Activated CD4-positive, alpha-beta memory T cell treated with anti-CD3 and anti-CD28 coated beads for 36 hours (primary cell): ENCODE measurements at regions of chr3 and their contacts with region 1.

Region 1: DNA sequence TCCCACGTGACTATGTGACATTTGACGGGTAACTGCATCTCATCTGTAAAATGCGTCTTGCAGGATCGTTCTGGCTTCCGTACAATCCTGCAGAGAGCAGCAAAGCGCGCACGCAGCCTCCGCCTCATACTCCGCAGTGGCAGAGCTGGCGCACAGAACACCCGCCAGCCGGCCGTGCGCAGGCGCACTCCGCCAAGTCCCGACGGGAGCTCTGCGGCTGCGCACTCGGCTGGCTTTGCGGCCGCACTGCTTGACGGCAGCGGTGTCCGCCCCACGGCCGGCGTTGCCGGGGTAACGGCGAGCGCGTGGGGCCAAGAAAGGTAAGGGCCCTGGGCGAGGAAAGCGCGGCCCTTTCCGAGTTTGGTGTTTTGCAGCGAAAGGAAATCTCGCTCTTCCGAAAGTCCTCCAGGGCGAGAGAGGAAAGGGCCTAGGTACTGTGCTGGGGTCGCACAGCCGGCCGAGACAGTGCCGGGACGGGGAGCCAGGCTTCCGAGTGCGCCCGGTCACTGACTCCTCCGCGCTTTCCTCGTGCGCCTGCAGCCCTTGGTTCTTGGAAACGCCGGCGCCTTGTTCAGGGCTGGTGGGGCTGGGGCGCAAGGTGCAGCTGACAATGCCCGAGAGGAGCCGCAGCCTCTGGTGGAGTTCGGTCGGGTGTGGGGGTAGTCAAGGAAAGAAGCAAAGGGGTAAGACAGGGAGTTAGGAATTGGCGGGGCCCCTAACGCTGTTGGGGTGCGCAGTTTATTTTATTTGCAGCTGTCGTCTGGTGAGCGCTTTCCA is at the start of gene TSEN2:
- DNase-seq: peak; percentile 97
- H3K4me3 Mint-ChIP-seq: peak within 1 kb of the TSS; percentile 99
- H3K27ac Mint-ChIP-seq: peak within 1 kb of the TSS; percentile 89
- H3K4me1 Mint-ChIP-seq: peaks cover 36% of the 10 kb centered on the region
- H3K27me3 Mint-ChIP-seq: no peaks in the 10 kb centered on the region
- total RNA-seq, gene TSEN2: 13.8 to 15.4 TPM

Region 2: GRCh38 chr3:12135029-12135657 is 349.2 kb before region 1 on chr3:
- CTCF ChIA-PET with region 1: interaction called, 274 read pairs
- POLR2A ChIA-PET with region 1: interaction called, 4 read pairs
- intact Hi-C with region 1: loop called (anchors 1 kb)
- DNase-seq: peak; percentile 78
- H3K4me3 Mint-ChIP-seq: no peak overlapping the region
- H3K27ac Mint-ChIP-seq: no peak overlapping the region
- H3K4me1 Mint-ChIP-seq: no peaks in the 10 kb centered on the region
- H3K27me3 Mint-ChIP-seq: peaks cover 12% of the 10 kb centered on the region

Region 3: DNA sequence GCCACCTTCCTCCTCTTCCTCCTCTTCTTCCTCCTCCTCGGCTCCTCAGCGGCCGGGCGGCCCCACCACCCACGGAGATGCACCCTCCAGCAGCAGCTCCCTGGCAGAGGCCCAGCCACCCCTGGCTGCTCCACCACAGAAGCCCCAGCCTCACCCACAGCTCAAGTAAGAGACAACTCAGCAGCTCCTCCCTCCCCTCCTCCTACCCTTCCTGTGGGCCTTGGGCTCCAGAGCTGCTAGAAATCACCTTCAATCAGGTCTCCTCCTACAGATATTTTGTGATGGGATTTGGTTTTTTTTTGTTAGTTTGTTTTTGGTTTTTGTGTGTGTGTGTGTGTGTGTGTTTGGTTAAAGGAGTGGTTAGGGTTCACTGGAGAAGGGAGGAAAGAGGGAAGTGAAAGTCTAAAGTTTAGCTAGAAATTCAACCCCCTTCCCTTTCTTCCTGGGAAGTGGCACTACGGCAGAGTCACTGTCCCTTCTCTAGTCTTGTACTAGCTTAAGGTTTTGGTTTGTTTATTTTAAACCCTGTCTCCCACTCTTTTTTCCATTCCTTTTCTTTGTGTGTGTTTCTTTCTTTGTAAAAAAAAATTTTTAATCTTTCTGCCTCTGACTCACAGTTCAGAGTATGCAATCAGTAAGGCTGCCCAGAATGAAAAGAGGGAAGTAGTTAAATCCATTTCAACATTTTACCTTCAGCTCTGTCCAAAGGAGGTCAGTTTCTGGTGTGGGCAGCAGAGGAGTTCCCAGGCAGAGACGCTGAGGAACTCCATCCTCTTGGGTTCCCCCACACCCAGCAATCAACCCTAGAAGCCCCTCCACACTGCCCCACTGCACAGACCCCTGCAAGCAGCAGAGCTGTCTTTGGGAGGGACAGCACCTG is 296.7 kb before region 1 on chr3:
- CTCF ChIA-PET with region 1: interaction called, 15 read pairs
- POLR2A ChIA-PET with region 1: no interaction called
- intact Hi-C with region 1: no loop called
- DNase-seq: peak; percentile 89
- H3K4me3 Mint-ChIP-seq: peak overlapping the region; percentile 59
- H3K27ac Mint-ChIP-seq: peak overlapping the region; percentile 99
- H3K4me1 Mint-ChIP-seq: peaks cover 41% of the 10 kb centered on the region
- H3K27me3 Mint-ChIP-seq: peaks cover 7% of the 10 kb centered on the region

Region 4: GRCh38 chr3:12253561-12254343 is 230.6 kb before region 1 on chr3:
- CTCF ChIA-PET with region 1: no interaction called
- POLR2A ChIA-PET with region 1: no interaction called
- intact Hi-C with region 1: no loop called
- DNase-seq: no peak
- H3K4me3 Mint-ChIP-seq: no peak overlapping the region
- H3K27ac Mint-ChIP-seq: no peak overlapping the region
- H3K4me1 Mint-ChIP-seq: no peaks in the 10 kb centered on the region
- H3K27me3 Mint-ChIP-seq: peaks cover 16% of the 10 kb centered on the region

Region 5: DNA sequence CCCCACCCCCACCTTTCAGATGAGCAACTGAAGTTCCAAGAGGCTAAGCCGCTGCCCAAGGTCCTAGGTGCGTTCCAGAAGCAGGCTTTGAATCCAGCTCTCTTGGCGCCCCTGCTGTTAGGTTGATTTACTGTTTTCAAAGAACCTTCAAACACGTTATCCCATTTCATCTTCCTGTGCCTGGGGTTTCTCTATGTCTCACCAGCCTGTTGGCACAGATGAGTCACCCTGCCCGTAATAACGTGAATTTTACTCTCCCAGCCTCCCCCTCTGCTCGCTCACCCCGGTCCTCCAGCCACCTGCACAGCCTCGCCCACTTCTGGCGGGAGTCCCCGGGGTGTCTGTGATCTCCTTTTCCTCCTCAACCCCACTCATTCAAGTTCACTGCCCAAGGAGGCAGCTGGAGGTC is 13.1 kb before region 1 on chr3:
- CTCF ChIA-PET with region 1: interaction called, 38 read pairs
- POLR2A ChIA-PET with region 1: interaction called, 20 read pairs
- intact Hi-C with region 1: loop called (anchors 1 kb)
- DNase-seq: peak; percentile 91
- H3K4me3 Mint-ChIP-seq: peak overlapping the region; percentile 8
- H3K27ac Mint-ChIP-seq: peak overlapping the region; percentile 64
- H3K4me1 Mint-ChIP-seq: peaks cover 37% of the 10 kb centered on the region
- H3K27me3 Mint-ChIP-seq: peaks cover 1% of the 10 kb centered on the region

Region 6: GRCh38 chr3:12588039-12589009 is 103.9 kb after region 1 on chr3:
- CTCF ChIA-PET with region 1: no interaction called
- POLR2A ChIA-PET with region 1: no interaction called
- intact Hi-C with region 1: no loop called
- DNase-seq: no peak
- H3K4me3 Mint-ChIP-seq: no peak overlapping the region
- H3K27ac Mint-ChIP-seq: peak overlapping the region; percentile 33
- H3K4me1 Mint-ChIP-seq: no peaks in the 10 kb centered on the region
- H3K27me3 Mint-ChIP-seq: no peaks in the 10 kb centered on the region

Region 7: DNA sequence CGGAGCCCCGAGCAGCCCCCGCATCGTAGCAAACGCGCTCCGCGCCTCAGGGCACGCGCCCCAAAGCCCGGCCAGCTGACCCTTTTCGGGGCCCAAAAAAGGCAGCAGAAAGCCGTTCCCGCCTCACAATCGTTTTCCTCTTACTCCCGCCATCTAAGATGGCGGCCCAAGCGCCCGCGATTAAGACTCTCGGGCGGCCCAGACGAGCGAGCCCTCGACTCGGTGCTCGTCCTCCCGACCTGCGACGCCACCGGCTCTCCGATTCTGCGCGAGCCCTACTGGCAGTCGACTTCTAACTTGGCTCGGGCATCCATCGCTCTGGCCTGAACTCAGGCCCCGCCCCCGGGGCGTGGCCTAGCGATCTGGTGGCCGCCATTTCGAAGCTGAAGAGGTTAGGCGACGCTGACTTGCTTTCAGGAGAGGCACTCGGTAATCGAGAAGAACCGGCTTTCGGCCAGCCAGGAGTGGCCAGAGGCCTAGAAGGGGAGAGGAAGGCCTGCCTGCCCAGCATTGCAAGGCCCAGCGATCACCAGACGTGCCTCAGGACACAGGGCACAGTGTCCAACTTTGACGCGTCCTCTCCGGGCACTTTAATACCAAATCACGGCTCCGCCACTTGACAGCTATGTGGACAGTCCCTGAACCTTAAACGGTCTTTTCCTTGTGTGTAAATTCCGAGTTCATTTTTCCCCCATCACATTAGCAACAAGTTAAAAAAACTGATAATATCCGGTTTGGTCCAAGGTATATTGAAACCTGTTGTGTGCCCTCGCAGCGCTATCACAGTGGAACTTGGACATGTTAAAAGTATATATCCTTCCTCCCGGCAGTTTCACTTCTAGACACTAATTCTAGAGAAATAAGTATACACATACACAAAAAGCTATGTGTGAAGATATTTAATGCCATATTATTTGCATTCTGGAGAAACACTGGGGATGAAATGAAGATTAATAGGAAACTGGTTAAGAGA is 179.8 kb after region 1 on chr3 and contains the start of gene RAF1:
- CTCF ChIA-PET with region 1: no interaction called
- POLR2A ChIA-PET with region 1: interaction called, 5 read pairs
- intact Hi-C with region 1: loop called (anchors 2 kb)
- DNase-seq: peak; percentile 98
- H3K4me3 Mint-ChIP-seq: peak within 1 kb of the TSS; percentile 88
- H3K27ac Mint-ChIP-seq: peak within 1 kb of the TSS; percentile 87
- H3K4me1 Mint-ChIP-seq: peaks cover 29% of the 10 kb centered on the region
- H3K27me3 Mint-ChIP-seq: no peaks in the 10 kb centered on the region
- total RNA-seq, gene RAF1: 64.6 to 66.9 TPM